K562 (cell line): ENCODE measurements at regions of chr3 and their contacts with region 1.

Region 1: GRCh38 chr3:197068077-197068476 is 38.5 kb upstream of the MELTF start:
- DNase-seq: no peak
- ATAC-seq: no peak
- H3K4me3 ChIP-seq: no peak overlapping the region
- H3K27ac ChIP-seq: no peak overlapping the region
- H3K4me1 ChIP-seq: no peaks in the 10 kb centered on the region
- H3K27me3 ChIP-seq: no peaks in the 10 kb centered on the region
- CTCF ChIP-seq: no peak
- EP300 ChIP-seq: no peak
- POLR2A ChIP-seq: no peak
- RAD21 ChIP-seq: no peak

Region 2: GRCh38 chr3:197083486-197083885 is 15.4 kb after region 1 on chr3:
- CTCF ChIA-PET with region 1: no interaction called
- POLR2A ChIA-PET with region 1: no interaction called
- in situ Hi-C with region 1: no loop called
- intact Hi-C with region 1: loop called (anchors 1 kb)
- DNase-seq: no peak
- ATAC-seq: peak; percentile 35; the same call in 2 of the 3 replicates
- H3K4me3 ChIP-seq: no peak overlapping the region
- H3K27ac ChIP-seq: no peak overlapping the region
- H3K4me1 ChIP-seq: no peaks in the 10 kb centered on the region; a peak in 1 of 5 replicates
- H3K27me3 ChIP-seq: no peaks in the 10 kb centered on the region
- CTCF ChIP-seq: no peak
- EP300 ChIP-seq: no peak
- POLR2A ChIP-seq: no peak
- RAD21 ChIP-seq: no peak